ENCODE measurements at regions of chr1 and their contacts with region 1.

Region 1: DNA sequence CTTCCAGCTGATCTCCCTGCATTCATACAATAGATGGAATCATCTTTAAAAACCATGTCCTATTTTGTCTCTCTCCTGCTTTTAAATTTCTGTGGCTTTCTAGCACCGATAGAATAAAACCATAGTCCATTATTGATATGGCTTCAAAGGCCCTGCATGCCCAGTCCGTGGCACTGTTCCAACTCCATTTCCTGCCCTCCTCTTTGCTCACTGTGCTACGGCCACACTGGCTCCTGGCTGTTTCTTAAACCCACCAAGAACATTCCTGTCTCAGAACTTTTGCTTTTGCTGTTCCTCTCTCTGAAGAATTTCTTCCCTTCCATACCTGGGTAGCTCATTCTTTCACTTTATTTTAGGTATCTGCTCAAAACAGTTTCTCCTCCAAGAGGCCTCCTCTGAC is 7.2 kb downstream of the SLAMF1 start:
- DNase-seq: no peak
- H3K4me3 Mint-ChIP-seq: peak overlapping the region; percentile 71
- H3K27ac Mint-ChIP-seq: peak overlapping the region; percentile 94
- H3K4me1 Mint-ChIP-seq: peaks cover 84% of the 10 kb centered on the region
- H3K27me3 Mint-ChIP-seq: no peaks in the 10 kb centered on the region

Region 2: DNA sequence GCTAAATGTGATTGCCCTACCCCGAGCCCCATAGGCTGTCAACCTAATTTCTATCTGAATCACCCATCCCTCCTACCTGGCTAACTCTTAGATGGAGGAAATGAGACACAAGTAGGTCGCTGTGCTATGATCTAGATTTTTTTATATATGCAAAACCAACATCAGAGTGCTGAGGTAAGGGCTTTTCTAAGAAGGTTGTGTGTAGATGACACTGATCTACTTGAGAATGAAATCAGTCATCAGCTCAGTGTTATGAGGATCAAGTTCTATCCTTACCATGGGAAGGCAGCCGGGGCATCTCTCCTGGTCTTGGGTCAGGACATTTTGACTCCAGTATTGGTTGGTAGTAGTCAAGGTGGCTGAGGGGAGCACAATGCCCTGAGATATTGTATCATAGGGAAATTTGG is 16.4 kb before region 1 on chr1:
- intact Hi-C with region 1: loop called (anchors 1 kb)
- DNase-seq: no peak
- H3K4me3 Mint-ChIP-seq: peak overlapping the region; percentile 68
- H3K27ac Mint-ChIP-seq: peak overlapping the region; percentile 100
- H3K4me1 Mint-ChIP-seq: peaks cover 87% of the 10 kb centered on the region
- H3K27me3 Mint-ChIP-seq: no peaks in the 10 kb centered on the region

Region 3: GRCh38 chr1:160629286-160630210 is 10.1 kb before region 1 on chr1:
- intact Hi-C with region 1: loop called (anchors 1 kb)
- DNase-seq: peak; percentile 73
- H3K4me3 Mint-ChIP-seq: peak overlapping the region; percentile 20
- H3K27ac Mint-ChIP-seq: peak overlapping the region; percentile 100
- H3K4me1 Mint-ChIP-seq: peaks cover 95% of the 10 kb centered on the region
- H3K27me3 Mint-ChIP-seq: no peaks in the 10 kb centered on the region

Region 4: GRCh38 chr1:160657250-160657781 is 17.7 kb after region 1 on chr1:
- intact Hi-C with region 1: loop called (anchors 2 kb)
- DNase-seq: no peak
- H3K4me3 Mint-ChIP-seq: peak overlapping the region; percentile 11
- H3K27ac Mint-ChIP-seq: peak overlapping the region; percentile 80
- H3K4me1 Mint-ChIP-seq: peaks cover 64% of the 10 kb centered on the region
- H3K27me3 Mint-ChIP-seq: no peaks in the 10 kb centered on the region

Region 5: GRCh38 chr1:160675641-160676410 is 36.2 kb after region 1 on chr1:
- intact Hi-C with region 1: loop called (anchors 1 kb)
- DNase-seq: peak; percentile 63
- H3K4me3 Mint-ChIP-seq: peak overlapping the region; percentile 41
- H3K27ac Mint-ChIP-seq: peak overlapping the region; percentile 68
- H3K4me1 Mint-ChIP-seq: peaks cover 28% of the 10 kb centered on the region
- H3K27me3 Mint-ChIP-seq: no peaks in the 10 kb centered on the region

Region 6: DNA sequence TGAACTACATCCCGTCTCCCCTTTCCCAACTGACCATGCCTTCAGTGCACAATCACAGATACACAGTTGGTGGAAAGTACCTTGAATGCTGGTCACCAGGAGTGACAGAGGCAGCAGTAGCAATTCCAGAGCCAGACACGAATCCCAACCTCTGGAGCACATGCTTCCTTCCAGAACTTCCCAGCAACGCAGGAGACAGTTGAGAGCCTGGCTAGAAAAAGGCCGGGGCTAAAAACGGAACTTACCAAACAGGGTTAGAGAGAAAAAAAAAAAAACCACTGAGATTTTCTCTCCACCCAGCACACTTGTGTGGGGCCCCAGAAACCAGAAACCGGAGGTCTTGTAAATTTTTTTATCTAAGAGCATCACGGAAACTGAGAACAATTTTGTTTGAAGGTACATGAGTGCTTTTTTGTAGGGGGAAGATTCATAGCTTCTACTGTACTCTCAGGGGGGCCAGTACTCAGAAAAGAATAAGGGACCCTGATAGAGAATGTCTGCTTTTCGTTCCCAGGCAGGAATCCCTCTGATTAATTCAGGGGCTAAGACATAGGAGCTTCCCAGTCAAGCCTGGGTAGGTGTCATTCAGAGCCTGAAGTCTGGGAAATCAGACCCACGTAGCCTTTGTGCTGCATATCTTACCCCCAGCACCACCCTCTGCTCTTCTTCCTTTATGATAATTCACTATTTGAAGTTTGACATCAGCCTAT is 72.1 kb after region 1 on chr1 and contains the start of gene CD48:
- intact Hi-C with region 1: loop called (anchors 1 kb)
- DNase-seq: peak; percentile 56
- H3K4me3 Mint-ChIP-seq: no peak within 1 kb of the TSS
- H3K27ac Mint-ChIP-seq: no peak within 1 kb of the TSS
- H3K4me1 Mint-ChIP-seq: peaks cover 29% of the 10 kb centered on the region
- H3K27me3 Mint-ChIP-seq: no peaks in the 10 kb centered on the region
- total RNA-seq, gene CD48: 101 and 103 TPM in 2 replicates

Region 7: GRCh38 chr1:160951443-160952128 is 311.9 kb after region 1 on chr1:
- intact Hi-C with region 1: no loop called
- DNase-seq: peak; percentile 59
- H3K4me3 Mint-ChIP-seq: no peak overlapping the region
- H3K27ac Mint-ChIP-seq: no peak overlapping the region
- H3K4me1 Mint-ChIP-seq: peaks cover 7% of the 10 kb centered on the region
- H3K27me3 Mint-ChIP-seq: no peaks in the 10 kb centered on the region

Measured in activated T-helper 2 cell treated with anti-CD3 and anti-CD28 coated beads, Interferon-gamma antibody, Interleukin-2, Interleukin-4, amounts not matched to agents 10 μg/mL and 5 μg/mL and 100 μg/mL, durations not matched to agents 14 hours and 24 hours and 36 hours (primary cell).